ENCODE measurements at regions of chr5 and their contacts with region 1.

Region 1: DNA sequence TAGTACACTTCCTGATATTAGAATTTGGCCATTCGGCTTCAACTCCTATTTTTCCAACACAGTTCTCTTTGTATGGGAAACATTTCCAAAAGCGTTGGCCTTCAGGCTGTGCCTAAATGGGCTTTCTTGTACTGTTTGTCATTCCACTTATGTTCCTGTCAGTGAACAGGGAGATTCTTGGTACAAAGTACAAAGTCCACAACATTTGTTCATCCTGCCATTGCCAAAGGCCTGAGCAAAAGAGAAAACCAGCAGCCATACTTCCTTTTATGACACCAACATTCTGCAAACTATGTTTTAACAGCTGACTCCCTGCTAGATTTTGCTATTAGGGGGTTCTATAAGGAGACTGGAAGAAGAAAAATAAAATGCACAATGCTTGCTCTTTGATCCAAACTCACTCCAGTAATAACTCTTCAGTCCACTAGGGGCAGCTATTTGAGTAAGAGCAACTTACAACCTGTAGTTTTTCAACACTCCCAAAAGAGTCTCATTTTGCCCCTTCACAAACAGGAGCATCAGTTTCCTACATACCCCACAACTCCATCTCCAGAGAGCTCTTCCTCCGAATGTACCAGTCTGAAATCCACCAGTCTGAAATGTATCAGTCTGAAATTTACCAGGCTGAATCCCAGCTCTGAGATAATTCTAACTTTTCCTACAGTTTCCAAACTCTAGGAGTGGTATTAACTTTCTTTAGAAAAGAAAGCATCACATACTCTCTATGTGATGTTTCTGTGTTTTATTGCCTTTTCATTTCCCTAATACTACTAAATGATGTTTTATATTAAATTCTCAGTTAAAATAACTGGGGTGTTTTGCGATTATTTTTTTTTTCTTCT is 693.8 kb downstream of the DNAH5 start:
- DNase-seq: no peak
- H3K4me3 ChIP-seq: no peak overlapping the region
- H3K27ac ChIP-seq: no peak overlapping the region
- H3K4me1 ChIP-seq: no peaks in the 10 kb centered on the region
- H3K27me3 ChIP-seq: no peaks in the 10 kb centered on the region
- CTCF ChIP-seq: peak; percentile 39 to 56 (median 48)
- POLR2A ChIP-seq: no peak

Region 2: GRCh38 chr5:13478831-13479465 is 228.3 kb after region 1 on chr5:
- intact Hi-C with region 1: loop called in 1 of 2 experiments (anchors 10 kb)
- DNase-seq: peak; percentile 40 to 66 (median 46)
- H3K4me3 ChIP-seq: no peak overlapping the region
- H3K27ac ChIP-seq: no peak overlapping the region
- H3K4me1 ChIP-seq: no peaks in the 10 kb centered on the region
- H3K27me3 ChIP-seq: no peaks in the 10 kb centered on the region
- CTCF ChIP-seq: peak; percentile 42 to 68 (median 62)
- POLR2A ChIP-seq: no peak

Region 3: DNA sequence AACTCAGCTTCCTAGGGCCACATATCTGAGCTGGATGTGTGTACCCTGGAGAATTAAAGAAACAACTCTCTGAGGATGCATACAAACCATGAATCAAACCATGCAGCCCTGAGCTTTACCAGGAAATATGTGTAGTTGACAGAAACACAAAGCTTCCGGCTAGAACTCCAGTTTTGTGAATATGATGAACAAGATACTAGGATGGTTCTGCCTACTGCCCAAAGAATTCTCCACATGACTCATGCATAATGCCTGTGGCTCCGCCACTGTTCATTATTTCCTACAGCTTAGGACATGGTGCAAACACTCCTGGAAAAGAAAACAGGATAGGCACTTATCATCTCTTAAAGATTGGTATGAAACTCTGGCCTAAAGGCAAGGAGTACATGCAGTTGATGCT is 350.4 kb after region 1 on chr5:
- intact Hi-C with region 1: no loop called
- DNase-seq: no peak
- H3K4me3 ChIP-seq: no peak overlapping the region
- H3K27ac ChIP-seq: no peak overlapping the region
- H3K4me1 ChIP-seq: no peaks in the 10 kb centered on the region
- H3K27me3 ChIP-seq: no peaks in the 10 kb centered on the region
- CTCF ChIP-seq: no peak
- POLR2A ChIP-seq: no peak

Measured in adrenal gland (tissue), 19 donors.